ENCODE measurements at regions of chr3 and their contacts with region 1.

Region 1: DNA sequence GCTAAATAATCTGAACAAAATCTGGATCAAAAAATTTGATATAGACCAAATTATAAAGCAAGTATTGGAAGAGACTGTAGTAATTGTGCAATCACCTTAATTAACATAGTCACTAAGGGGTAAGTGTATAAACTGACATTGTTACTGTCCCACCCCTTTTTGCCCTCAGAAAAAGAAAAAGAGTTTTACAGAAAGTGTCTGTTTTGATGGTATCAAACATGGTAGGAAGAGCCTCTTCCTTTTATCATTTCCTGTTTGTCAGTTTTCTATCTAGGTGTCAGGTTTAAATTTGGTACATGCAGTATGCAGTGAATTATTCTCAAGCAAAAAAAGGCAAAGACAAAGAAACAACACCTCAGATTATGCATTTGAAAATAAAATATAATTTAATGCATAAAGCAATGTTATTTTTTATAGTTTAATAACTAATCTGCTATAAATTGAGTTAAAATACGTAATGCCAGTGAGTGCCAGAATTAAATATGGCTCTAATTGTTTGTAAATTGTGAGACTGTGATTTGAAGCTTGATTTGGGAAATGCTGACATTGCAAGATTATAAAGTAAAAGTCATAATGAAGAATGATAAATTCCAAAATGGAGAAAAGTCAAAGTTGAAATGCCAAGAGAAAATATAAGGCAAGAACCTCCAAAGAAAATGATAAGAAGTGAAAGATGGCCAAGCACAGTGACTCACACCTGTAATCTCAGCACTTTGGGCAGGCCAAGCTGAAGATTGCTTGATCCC is 30.3 kb upstream of the CMC1 start:
- DNase-seq: peak in 3 of 14 experiments; percentile 22 to 68 (median 29)
- ATAC-seq: peak; percentile 74
- H3K4me3 ChIP-seq: no peak overlapping the region
- H3K4me3 Mint-ChIP-seq: peak overlapping the region; percentile 40
- H3K27ac ChIP-seq: no peak overlapping the region
- H3K27ac Mint-ChIP-seq: peak overlapping the region; percentile 48
- H3K4me1 ChIP-seq: peaks cover 9% of the 10 kb centered on the region
- H3K4me1 Mint-ChIP-seq: peaks cover 50% of the 10 kb centered on the region
- H3K27me3 ChIP-seq: no peaks in the 10 kb centered on the region
- H3K27me3 Mint-ChIP-seq: no peaks in the 10 kb centered on the region
- CTCF ChIP-seq: no peak

Region 2: DNA sequence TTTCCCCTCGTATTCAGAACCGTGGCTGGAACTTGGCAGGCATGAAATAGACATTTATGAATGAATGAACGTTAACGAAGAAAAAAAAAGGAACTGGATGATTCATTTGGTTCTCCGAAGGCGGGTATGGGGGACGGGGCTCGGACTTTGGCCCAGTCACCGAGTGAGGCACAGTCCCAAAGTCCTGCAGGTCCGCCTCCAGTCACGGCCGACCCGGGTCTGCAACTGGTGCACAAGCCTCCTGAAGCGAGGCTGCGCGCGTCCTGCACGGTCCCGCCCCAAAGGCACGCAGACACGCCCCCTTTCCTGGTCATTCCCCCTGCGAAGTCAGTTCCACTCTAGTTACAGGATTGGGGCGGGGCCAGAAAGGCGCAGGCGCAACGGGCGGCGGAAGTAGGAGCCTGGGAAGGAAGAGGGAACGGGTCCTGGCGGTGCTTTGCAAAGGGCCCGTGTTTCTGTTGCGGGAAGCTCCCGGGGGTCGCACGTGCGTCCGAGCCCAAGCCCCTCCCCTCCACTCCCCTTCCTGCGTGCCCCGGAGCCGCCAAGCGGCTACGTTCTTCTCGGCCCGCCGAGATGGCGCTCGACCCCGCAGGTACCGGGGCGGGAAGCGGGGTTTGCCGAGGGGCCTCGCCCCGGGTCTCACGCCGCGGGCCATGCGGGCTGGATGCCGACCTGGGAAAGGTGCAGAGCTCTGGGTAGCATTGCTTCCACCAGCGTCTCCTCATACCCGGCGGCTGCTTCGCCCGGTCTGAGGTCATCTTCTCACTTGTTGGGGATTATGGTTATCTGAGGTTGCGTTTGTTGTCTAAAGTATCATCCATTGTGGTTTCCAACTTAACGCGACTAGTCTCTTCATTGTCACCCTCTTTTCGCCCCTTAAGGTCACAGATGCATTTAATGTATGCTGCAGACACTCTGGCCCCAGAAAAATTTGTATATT is 30.4 kb after region 1 on chr3 and contains the start of gene CMC1:
- CTCF ChIA-PET with region 1: interaction called, 3 read pairs
- POLR2A ChIA-PET with region 1: no interaction called
- intact Hi-C with region 1: loop called in 1 of 2 experiments (anchors 1 kb)
- DNase-seq: peak; percentile 72 to 96 (median 88)
- ATAC-seq: peak; percentile 93
- H3K4me3 ChIP-seq: peak within 1 kb of the TSS; percentile 66
- H3K4me3 Mint-ChIP-seq: peak within 1 kb of the TSS; percentile 98
- H3K27ac ChIP-seq: peak within 1 kb of the TSS; percentile 27 to 69
- H3K27ac Mint-ChIP-seq: peak within 1 kb of the TSS; percentile 79
- H3K4me1 ChIP-seq: peaks cover 33% of the 10 kb centered on the region
- H3K4me1 Mint-ChIP-seq: peaks cover 49% of the 10 kb centered on the region
- H3K27me3 ChIP-seq: no peaks in the 10 kb centered on the region
- H3K27me3 Mint-ChIP-seq: no peaks in the 10 kb centered on the region
- CTCF ChIP-seq: no peak
- total RNA-seq, gene CMC1: 5.0 to 6.6 TPM

Measured in CD4-positive, alpha-beta T cell (primary cell).